ENCODE measurements at regions of chr4 and their contacts with region 1.

Region 1: GRCh38 chr4:37977471-37978247 is 17.5 kb downstream of the PTTG2 start:
- DNase-seq: peak; percentile 79 to 80
- ATAC-seq: peak; percentile 80 to 90 (median 84)
- H3K4me3 ChIP-seq: peak overlapping the region; percentile 53 to 98 (median 92)
- H3K27ac ChIP-seq: peak overlapping the region; percentile 86 to 99 (median 98)
- H3K4me1 ChIP-seq: peaks cover 5 to 62% (median 42%) of the 10 kb centered on the region in 9 donors
- H3K27me3 ChIP-seq: no peaks in the 10 kb centered on the region
- CTCF ChIP-seq: peak; percentile 48 to 91 (median 76)

Region 2: DNA sequence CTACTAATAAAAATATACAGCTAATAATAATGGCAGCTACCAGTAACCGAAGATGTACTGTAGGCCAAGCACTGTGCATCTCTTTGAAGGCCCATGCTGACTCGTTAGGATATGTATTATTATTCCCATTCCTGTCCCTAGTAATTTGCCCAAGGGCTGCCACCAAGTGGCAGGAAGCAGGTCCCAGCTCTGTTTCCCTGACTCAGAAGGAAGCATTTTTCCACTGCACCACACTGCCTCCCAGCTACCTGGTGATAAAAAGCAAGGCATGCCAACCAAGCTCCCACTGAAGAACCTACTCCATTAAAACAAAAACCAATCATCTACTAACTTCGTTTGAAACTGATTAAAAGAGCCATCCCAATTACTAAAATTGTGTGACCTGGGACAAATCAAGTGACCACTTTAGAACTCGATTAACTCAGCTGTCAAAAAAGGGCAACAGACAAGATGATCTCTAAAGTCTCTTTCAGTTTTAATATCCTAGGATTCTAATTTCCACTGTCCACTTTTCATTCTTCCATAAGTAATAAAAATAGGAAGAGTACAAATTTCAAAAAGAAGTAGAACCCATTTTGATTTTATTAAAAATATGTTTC is 175.5 kb before region 1 on chr4:
- intact Hi-C with region 1: loop called in 1 of 10 experiments (anchors 5 kb)
- DNase-seq: peak in 1 of 2 donors; percentile 53
- ATAC-seq: peak; percentile 30 to 89 (median 79)
- H3K4me3 ChIP-seq: no peak overlapping the region
- H3K27ac ChIP-seq: no peak overlapping the region
- H3K4me1 ChIP-seq: peaks cover 0 to 7% (median 0%) of the 10 kb centered on the region in 9 donors
- H3K27me3 ChIP-seq: no peaks in the 10 kb centered on the region
- CTCF ChIP-seq: peak in 8 of 9 donors; percentile 21 to 77 (median 52)

Region 3: GRCh38 chr4:37826295-37827029 is 151.2 kb before region 1 on chr4 and contains the start of gene PGM2:
- intact Hi-C with region 1: loop called in 8 of 10 experiments (anchors 5 to 10 kb)
- DNase-seq: peak; percentile 89 to 91
- ATAC-seq: peak; percentile 95 to 98 (median 97)
- H3K4me3 ChIP-seq: peak within 1 kb of the TSS; percentile 60 to 93 (median 82)
- H3K27ac ChIP-seq: peak within 1 kb of the TSS; percentile 66 to 94 (median 87)
- H3K4me1 ChIP-seq: peaks cover 4 to 48% (median 28%) of the 10 kb centered on the region in 9 donors
- H3K27me3 ChIP-seq: no peaks in the 10 kb centered on the region
- CTCF ChIP-seq: peak in 3 of 9 donors; percentile 13 to 38 (median 27)
- total RNA-seq, gene PGM2: 5.9 to 16.4 (median 9.9) TPM

Region 4: DNA sequence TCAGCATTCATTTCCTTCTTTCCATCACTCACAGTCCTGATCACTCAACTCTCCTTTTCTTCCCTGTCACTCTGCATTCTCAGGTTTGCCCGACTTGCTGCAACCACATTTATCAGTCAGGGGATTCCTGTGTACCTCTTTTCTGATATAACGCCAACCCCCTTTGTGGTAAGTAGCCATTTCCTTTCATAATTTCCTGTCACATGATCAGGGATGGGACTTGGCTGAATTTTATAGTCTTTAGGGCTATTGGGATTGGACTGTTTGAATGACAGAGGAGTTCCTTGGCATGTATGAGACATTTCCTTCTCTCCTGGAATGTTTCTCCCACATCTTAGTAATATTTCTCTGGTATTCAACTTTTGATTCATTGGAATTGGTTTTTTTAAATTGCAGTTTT is 140.2 kb before region 1 on chr4:
- intact Hi-C with region 1: loop called in 1 of 10 experiments (anchors 10 kb)
- DNase-seq: no peak
- ATAC-seq: peak in 6 of 8 donors; percentile 65 to 84 (median 78)
- H3K4me3 ChIP-seq: no peak overlapping the region
- H3K27ac ChIP-seq: peak overlapping the region in 6 of 10 donors; percentile 28 to 75 (median 51)
- H3K4me1 ChIP-seq: peaks cover 0 to 36% (median 17%) of the 10 kb centered on the region in 9 donors
- H3K27me3 ChIP-seq: no peaks in the 10 kb centered on the region
- CTCF ChIP-seq: no peak

Region 5: DNA sequence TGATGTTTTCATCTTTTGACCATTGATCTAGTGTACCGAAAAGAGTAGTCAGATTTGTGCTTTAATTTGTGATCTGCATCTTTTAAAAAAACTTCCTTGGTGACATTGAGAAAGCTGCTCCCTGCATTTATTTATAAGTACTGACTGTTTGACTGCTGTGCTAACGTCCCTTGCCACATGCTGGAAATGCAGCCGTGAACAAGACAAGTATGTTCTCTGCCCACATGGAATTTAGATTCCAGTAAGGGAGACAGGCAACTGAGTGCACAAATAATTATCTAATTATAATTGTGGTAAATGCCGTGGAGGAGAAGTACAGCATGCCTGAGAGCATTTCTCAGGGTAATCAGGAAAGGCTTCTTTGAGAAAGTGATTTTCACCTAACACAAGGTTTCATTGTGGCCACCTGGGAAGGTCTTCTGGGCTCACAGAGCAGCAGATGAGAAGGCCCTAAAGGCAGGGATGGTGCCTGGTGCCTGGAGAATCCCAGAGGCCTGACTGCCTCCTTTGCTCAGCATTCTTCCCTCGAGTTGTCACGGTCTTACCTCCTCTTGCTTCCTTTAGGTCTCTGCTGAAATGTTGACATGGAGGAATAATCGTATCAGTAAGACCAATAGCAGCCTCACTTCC is 38.3 kb after region 1 on chr4:
- intact Hi-C with region 1: loop called in 1 of 10 experiments (anchors 5 kb)
- DNase-seq: no peak
- ATAC-seq: peak in 7 of 8 donors; percentile 65 to 85 (median 78)
- H3K4me3 ChIP-seq: no peak overlapping the region
- H3K27ac ChIP-seq: peak overlapping the region in 9 of 10 donors; percentile 20 to 68 (median 55)
- H3K4me1 ChIP-seq: peaks cover 2 to 36% (median 12%) of the 10 kb centered on the region in 9 donors
- H3K27me3 ChIP-seq: no peaks in the 10 kb centered on the region
- CTCF ChIP-seq: no peak

Region 6: GRCh38 chr4:38034986-38035882 is 57.6 kb after region 1 on chr4:
- intact Hi-C with region 1: loop called in 9 of 10 experiments (anchors 2 to 10 kb)
- DNase-seq: peak in 1 of 2 donors; percentile 77
- ATAC-seq: peak in 5 of 8 donors; percentile 47 to 86 (median 70)
- H3K4me3 ChIP-seq: no peak overlapping the region
- H3K27ac ChIP-seq: peak overlapping the region in 1 of 10 donors; percentile 26
- H3K4me1 ChIP-seq: peaks cover 0 to 8% (median 0%) of the 10 kb centered on the region in 9 donors
- H3K27me3 ChIP-seq: no peaks in the 10 kb centered on the region
- CTCF ChIP-seq: peak; percentile 55 to 81 (median 72)

Region 7: GRCh38 chr4:38306482-38307071 is 328.9 kb after region 1 on chr4:
- intact Hi-C with region 1: no loop called
- DNase-seq: no peak
- ATAC-seq: no peak
- H3K4me3 ChIP-seq: no peak overlapping the region
- H3K27ac ChIP-seq: no peak overlapping the region
- H3K4me1 ChIP-seq: peaks cover 0 to 8% (median 0%) of the 10 kb centered on the region in 9 donors
- H3K27me3 ChIP-seq: no peaks in the 10 kb centered on the region
- CTCF ChIP-seq: no peak

Measured in heart right ventricle (tissue), 16 donors.